CD8-positive, alpha-beta T cell (primary cell): ENCODE measurements at regions of chr7 and their contacts with region 1.

Region 1: DNA sequence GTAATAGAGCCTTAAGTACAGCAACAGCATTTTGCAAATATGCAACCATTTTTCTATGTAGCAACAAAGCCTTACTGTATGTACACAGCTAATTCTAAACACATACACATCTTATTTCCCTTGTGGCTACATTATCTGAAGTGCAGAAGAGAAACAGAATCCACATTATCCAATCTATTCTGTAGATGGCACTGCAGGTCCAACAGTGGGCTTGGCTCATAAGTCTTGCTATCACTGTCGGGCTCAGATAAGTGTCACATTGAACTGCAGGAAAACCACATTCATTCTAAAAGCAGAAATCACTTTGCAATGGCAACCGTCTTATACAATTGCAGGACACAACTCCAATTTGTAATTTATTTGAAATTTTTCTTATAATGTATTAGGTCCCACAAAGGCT is 109.8 kb upstream of the NOBOX start:
- DNase-seq: peak in 2 of 9 experiments; percentile 13 to 17
- ATAC-seq: no peak
- H3K4me3 ChIP-seq: no peak overlapping the region
- H3K4me3 Mint-ChIP-seq: no peak overlapping the region
- H3K27ac ChIP-seq: no peak overlapping the region
- H3K27ac Mint-ChIP-seq: no peak overlapping the region
- H3K4me1 ChIP-seq: no peaks in the 10 kb centered on the region
- H3K4me1 Mint-ChIP-seq: peaks cover 11% of the 10 kb centered on the region
- H3K27me3 ChIP-seq: no peaks in the 10 kb centered on the region
- H3K27me3 Mint-ChIP-seq: no peaks in the 10 kb centered on the region
- CTCF ChIP-seq: no peak

Region 2: DNA sequence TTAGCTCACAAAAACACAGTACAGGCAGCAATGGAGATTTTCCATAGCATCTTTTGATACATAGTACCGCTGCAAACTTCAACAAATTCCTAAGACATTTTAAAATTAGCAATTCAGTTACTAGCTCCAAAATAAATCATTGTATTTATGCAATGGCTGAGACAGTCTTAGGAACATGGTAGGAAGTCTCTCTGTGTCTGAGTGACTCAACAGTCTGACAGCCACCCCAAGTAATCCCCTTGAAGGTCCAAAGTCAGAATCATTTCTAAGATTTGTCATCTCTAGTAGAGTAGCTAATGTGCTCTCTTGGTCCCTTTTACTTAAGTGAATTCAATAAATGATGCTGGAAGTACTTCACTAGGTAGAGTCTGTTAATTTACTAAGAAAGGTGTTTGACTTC is 16.1 kb before region 1 on chr7:
- CTCF ChIA-PET with region 1: no interaction called
- POLR2A ChIA-PET with region 1: no interaction called
- intact Hi-C with region 1: no loop called
- DNase-seq: no peak
- ATAC-seq: no peak
- H3K4me3 ChIP-seq: no peak overlapping the region
- H3K4me3 Mint-ChIP-seq: no peak overlapping the region
- H3K27ac ChIP-seq: no peak overlapping the region
- H3K27ac Mint-ChIP-seq: no peak overlapping the region
- H3K4me1 ChIP-seq: no peaks in the 10 kb centered on the region
- H3K4me1 Mint-ChIP-seq: no peaks in the 10 kb centered on the region
- H3K27me3 ChIP-seq: no peaks in the 10 kb centered on the region
- H3K27me3 Mint-ChIP-seq: no peaks in the 10 kb centered on the region
- CTCF ChIP-seq: no peak

Region 3: DNA sequence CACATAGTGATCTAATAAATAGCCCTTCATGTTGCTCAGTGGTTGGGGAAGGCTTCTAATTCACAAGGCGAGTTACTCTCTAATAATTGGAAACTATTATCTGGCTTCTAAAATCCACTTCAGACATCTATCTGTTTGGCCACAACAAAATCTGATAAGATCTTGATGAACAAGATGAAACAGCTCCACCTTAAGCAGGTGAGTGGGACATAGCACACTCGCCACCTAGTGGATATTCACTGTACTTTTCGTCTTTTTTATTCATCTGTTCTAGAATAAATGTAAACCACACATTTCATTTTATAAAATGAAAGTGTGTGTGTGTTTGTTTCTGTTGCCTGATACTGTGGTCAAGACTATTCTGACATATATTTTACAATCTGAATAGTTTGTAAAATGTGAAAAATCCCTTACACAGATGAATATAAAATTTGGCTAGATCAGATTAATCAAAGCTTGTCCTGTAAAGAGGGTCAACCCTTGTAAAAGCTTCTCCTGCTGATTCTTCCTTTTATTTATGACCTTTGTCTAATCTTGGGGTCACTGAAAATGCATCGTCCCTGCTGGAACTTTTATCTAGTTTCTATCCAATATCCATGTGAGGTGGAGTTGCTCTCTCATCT is 1576.8 kb after region 1 on chr7:
- CTCF ChIA-PET with region 1: no interaction called
- POLR2A ChIA-PET with region 1: no interaction called
- intact Hi-C with region 1: loop called in 1 of 2 experiments (anchors 10 kb)
- DNase-seq: peak in 2 of 9 experiments; percentile 5 to 18
- ATAC-seq: no peak
- H3K4me3 ChIP-seq: no peak overlapping the region
- H3K4me3 Mint-ChIP-seq: no peak overlapping the region
- H3K27ac ChIP-seq: no peak overlapping the region
- H3K27ac Mint-ChIP-seq: no peak overlapping the region
- H3K4me1 ChIP-seq: no peaks in the 10 kb centered on the region
- H3K4me1 Mint-ChIP-seq: no peaks in the 10 kb centered on the region
- H3K27me3 ChIP-seq: no peaks in the 10 kb centered on the region
- H3K27me3 Mint-ChIP-seq: no peaks in the 10 kb centered on the region
- CTCF ChIP-seq: peak; percentile 54